ENCODE measurements at regions of chr6 and their contacts with region 1.

Region 1: DNA sequence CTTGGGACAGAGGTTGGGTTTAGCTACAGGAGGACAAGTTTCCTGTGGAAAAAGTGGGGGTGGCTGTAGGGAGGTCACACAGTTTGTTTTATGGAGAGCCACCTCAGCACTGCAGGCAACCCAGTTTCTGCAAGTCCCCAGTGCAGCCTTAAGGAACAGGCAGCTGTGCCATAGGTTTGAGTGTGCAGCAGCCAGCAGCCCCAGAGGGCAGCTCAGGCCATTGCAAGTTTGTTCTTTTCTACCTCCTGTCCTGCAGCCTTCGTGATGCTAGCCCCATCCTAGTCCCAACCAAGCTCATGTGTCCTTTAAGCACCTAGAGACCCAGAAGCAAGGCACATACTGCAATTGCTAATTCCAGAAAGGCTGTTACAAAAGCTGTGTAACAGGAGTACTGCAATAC is 58.8 kb downstream of the ZBTB9 start:
- DNase-seq: no peak
- ATAC-seq: peak; percentile 76
- H3K4me3 ChIP-seq: no peak overlapping the region
- H3K27ac ChIP-seq: no peak overlapping the region
- H3K4me1 ChIP-seq: 0 out of 2 replicates have a peak, but pooled peaks cover 4% of the 10 kb centered on the region
- H3K27me3 ChIP-seq: no peaks in the 10 kb centered on the region
- CTCF ChIP-seq: no peak

Region 2: DNA sequence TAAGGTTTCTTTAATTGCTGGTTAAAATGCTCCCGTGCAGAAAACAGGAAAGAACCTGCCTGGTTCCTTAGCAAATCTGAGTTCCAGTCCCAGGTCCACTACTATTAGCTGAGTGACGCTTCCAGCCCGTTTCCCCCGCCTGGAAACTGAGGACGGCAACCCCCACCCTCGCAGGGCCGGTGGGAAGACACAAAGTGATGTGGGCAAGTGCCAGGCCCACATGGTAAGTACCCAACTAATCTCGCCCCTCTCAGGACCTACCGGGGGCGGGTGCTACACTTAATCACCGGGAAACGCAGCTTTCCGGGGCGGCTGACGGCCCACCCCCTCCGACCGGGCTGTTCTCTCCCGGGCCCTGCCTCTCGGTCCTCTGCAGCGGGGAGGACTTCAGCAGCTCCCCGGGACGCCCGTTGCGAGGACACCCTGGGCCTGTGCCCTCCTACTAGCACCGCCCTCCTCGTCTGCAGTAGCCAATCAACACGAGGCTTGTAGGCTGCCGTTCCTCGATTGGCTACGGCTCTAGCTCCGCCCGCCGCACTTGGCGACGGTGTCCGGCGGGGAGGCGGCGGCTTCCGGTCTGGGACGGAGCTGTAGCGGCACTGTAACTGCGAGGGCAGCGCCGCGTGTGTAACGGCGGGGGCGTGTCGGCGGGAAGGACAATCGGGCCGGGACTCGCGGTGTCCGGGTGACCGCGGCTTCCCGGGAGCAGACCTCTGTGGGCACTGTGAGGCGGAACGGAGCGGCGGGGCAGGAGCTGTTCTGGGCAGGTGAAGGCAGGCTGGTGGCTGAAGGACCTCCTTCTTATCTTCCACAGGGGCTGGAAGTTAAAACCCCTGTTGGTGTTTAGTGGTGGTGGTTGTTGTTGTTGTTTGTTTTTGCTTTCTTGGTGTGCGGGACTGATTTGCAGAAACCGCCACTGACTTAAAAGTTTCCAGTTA is 58.9 kb before region 1 on chr6 and contains the start of gene ZBTB9:
- CTCF ChIA-PET with region 1: no interaction called
- POLR2A ChIA-PET with region 1: interaction called, 10 read pairs
- in situ Hi-C with region 1: no loop called
- intact Hi-C with region 1: no loop called
- DNase-seq: peak; percentile 67
- ATAC-seq: peak; percentile 99
- H3K4me3 ChIP-seq: peak within 1 kb of the TSS; percentile 78 to 97
- H3K27ac ChIP-seq: peak within 1 kb of the TSS; percentile 97
- H3K4me1 ChIP-seq: peaks cover 7% of the 10 kb centered on the region; the same call in 1 of the 2 replicates
- H3K27me3 ChIP-seq: no peaks in the 10 kb centered on the region
- CTCF ChIP-seq: no peak
- total RNA-seq, gene ZBTB9: 17.6 TPM

Region 3: DNA sequence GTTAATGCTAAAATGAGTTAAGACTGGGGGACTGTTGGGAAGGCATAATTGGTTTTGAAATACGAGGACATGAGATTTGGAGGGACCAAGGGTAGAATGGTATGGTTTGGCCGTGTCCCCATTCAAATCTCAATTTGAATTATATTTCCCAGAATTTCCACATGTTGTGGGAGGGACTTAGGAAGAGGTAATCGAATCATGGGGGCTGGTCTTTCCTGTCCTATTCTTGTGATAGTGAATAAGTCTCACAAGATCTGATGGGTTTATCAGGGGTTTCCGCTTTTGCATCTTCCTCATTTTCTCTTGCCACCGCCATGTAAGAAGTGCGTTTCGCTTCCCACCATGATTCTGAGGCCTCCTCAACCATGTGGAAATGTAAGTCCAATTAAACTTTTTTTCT is 46.1 kb before region 1 on chr6:
- CTCF ChIA-PET with region 1: no interaction called
- POLR2A ChIA-PET with region 1: interaction called, 12 read pairs
- in situ Hi-C with region 1: no loop called
- intact Hi-C with region 1: no loop called
- DNase-seq: no peak
- ATAC-seq: no peak
- H3K4me3 ChIP-seq: no peak overlapping the region
- H3K27ac ChIP-seq: no peak overlapping the region
- H3K4me1 ChIP-seq: no peaks in the 10 kb centered on the region
- H3K27me3 ChIP-seq: no peaks in the 10 kb centered on the region
- CTCF ChIP-seq: no peak

Region 4: DNA sequence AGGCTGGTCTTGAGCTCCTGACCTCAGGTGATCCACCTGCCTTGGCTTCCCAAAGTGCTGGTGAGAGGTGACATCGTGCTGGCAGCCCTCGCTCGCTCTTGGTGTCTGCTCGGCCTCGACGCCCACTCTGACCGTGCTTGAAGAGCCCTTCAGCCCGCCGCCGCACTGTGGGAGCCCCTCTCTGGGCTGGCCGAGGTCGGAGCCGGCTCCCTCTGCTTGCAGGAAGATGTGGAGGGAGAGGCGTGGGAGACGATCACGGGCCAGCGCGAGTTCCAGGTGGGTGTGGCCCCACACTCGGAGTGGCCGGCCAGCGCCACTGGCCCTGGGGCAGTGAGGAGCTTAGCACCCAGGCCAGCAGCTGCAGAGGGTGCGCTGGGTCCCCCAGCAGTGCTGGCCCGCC is 10.7 kb before region 1 on chr6:
- CTCF ChIA-PET with region 1: interaction called, 12 read pairs
- POLR2A ChIA-PET with region 1: no interaction called
- in situ Hi-C with region 1: no loop called
- intact Hi-C with region 1: no loop called
- DNase-seq: no peak
- ATAC-seq: no peak
- H3K4me3 ChIP-seq: no peak overlapping the region
- H3K27ac ChIP-seq: no peak overlapping the region
- H3K4me1 ChIP-seq: no peaks in the 10 kb centered on the region; the same call in 1 of the 2 replicates
- H3K27me3 ChIP-seq: no peaks in the 10 kb centered on the region
- CTCF ChIP-seq: no peak

Region 5: DNA sequence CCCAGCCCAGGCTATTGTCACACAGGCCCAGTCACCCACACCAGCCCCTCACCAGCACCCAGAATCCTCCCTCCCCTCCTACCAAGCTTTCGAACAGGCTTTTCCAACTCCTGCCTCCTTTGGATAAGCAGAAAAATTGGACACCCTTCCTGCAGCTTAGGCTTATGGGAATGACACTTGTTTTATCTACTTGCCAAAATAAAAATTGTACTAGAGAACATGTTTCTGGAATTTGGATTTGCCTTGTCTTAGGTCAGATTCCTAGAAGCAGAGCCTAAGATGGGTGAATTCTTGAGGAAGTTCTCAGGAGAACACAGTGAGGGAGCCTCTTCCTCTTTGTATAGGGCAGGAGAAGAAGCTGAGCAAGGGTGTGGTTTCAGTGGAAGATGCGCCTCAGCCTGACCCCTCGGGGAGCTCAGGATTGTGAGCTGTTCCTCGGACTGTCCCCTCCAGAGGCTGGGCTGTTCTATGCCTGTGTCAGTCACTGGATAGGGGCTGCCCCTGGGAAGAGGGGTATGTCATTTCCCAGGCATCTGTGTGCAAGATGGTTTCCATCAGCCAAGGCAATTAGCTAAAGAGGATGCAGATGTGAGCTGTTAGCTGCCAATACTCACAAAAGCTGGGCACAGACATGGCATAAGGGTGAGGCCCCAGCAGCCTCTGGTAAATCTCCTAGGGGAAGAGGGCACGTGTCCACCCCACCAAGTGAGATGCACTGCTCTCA is 141.8 kb after region 1 on chr6:
- CTCF ChIA-PET with region 1: interaction called, 10 read pairs
- POLR2A ChIA-PET with region 1: no interaction called
- in situ Hi-C with region 1: no loop called
- intact Hi-C with region 1: no loop called
- DNase-seq: no peak
- ATAC-seq: no peak
- H3K4me3 ChIP-seq: no peak overlapping the region
- H3K27ac ChIP-seq: no peak overlapping the region
- H3K4me1 ChIP-seq: no peaks in the 10 kb centered on the region
- H3K27me3 ChIP-seq: no peaks in the 10 kb centered on the region
- CTCF ChIP-seq: no peak

Region 6: GRCh38 chr6:33694401-33694931 is 181.3 kb after region 1 on chr6:
- CTCF ChIA-PET with region 1: no interaction called
- POLR2A ChIA-PET with region 1: no interaction called
- in situ Hi-C with region 1: no loop called
- intact Hi-C with region 1: no loop called
- DNase-seq: peak; percentile 72
- ATAC-seq: peak; percentile 69
- H3K4me3 ChIP-seq: no peak overlapping the region
- H3K27ac ChIP-seq: peak overlapping the region; percentile 65
- H3K4me1 ChIP-seq: peaks cover 44% of the 10 kb centered on the region
- H3K27me3 ChIP-seq: no peaks in the 10 kb centered on the region
- CTCF ChIP-seq: no peak

Region 7: GRCh38 chr6:33707771-33708170 is 194.6 kb after region 1 on chr6:
- CTCF ChIA-PET with region 1: no interaction called
- POLR2A ChIA-PET with region 1: no interaction called
- in situ Hi-C with region 1: no loop called
- intact Hi-C with region 1: no loop called
- DNase-seq: no peak
- ATAC-seq: no peak
- H3K4me3 ChIP-seq: no peak overlapping the region
- H3K27ac ChIP-seq: no peak overlapping the region
- H3K4me1 ChIP-seq: peaks cover 8% of the 10 kb centered on the region
- H3K27me3 ChIP-seq: no peaks in the 10 kb centered on the region
- CTCF ChIP-seq: no peak